ENCODE measurements at regions of chr12 and their contacts with region 1.

Region 1: GRCh38 chr12:121060149-121061001 is 21.3 kb upstream of the OASL start:
- DNase-seq: peak; percentile 84
- H3K4me3 ChIP-seq: peak overlapping the region; percentile 59
- H3K27ac ChIP-seq: peak overlapping the region; percentile 18
- H3K4me1 ChIP-seq: peaks cover 12% of the 10 kb centered on the region
- CTCF ChIP-seq: peak; percentile 73

Region 2: DNA sequence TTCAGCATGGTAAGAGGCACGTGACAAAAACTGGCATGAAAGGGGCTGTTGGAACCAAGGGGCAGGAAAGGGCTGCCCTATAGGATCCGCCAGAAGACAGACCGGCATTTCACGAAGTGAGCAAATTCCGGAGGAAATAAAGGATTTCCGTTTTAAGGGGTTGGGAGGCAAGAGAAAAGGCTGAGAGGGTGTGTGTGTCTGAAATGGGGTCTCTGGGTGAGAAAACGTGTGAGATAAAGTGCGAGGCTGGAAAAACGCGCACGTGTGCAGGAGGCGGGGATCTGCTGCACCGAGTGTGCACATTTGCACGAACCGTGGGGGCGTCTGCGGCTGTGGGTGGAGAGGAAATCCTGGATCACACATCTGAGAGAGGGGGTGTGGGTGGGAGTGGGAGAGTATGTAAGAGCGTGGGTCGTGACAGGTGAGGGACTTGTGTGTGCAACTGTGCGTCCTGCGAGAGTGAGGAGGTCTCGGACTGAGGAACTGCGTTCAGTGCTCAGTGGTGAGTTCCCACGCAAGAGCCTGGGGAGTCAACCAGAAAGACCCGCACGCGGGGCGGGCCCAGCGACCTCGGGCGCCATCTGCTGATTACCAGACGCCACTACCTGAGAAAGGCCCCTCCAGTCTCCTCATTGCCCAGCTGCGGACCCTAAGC is 35.3 kb after region 1 on chr12:
- CTCF ChIA-PET with region 1: no interaction called
- POLR2A ChIA-PET with region 1: no interaction called
- intact Hi-C with region 1: loop called (anchors 1 kb)
- DNase-seq: peak; percentile 65
- H3K4me3 ChIP-seq: no peak overlapping the region
- H3K27ac ChIP-seq: no peak overlapping the region
- H3K4me1 ChIP-seq: peaks cover 6% of the 10 kb centered on the region
- CTCF ChIP-seq: peak; percentile 81

Region 3: GRCh38 chr12:121110211-121110940 is 50.0 kb after region 1 on chr12:
- CTCF ChIA-PET with region 1: no interaction called
- POLR2A ChIA-PET with region 1: no interaction called
- intact Hi-C with region 1: loop called (anchors 5 kb)
- DNase-seq: peak; percentile 69
- H3K4me3 ChIP-seq: no peak overlapping the region
- H3K27ac ChIP-seq: no peak overlapping the region
- H3K4me1 ChIP-seq: no peaks in the 10 kb centered on the region
- CTCF ChIP-seq: peak; percentile 99

Region 4: DNA sequence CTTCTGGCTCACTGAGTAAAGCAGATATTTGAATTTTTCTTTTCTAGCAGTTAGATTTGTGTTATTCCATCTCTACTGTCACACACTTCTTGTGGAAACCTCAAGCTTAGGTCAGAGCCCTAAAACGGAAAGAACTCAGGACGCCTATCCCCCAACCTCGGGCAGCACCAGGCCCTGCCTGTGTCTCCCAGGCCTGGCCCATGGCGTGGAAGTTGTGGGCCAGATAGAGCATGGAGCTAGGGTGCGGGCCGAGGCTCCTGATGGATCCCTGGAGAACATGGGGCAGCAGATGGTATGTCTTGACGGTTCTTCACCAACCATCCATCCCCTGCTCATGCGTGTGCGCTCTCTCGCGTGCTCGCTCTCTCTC is 170.1 kb after region 1 on chr12:
- CTCF ChIA-PET with region 1: no interaction called
- POLR2A ChIA-PET with region 1: no interaction called
- intact Hi-C with region 1: loop called (anchors 5 kb)
- DNase-seq: no peak
- H3K4me3 ChIP-seq: no peak overlapping the region
- H3K27ac ChIP-seq: no peak overlapping the region
- H3K4me1 ChIP-seq: peaks cover 12% of the 10 kb centered on the region
- CTCF ChIP-seq: no peak; the same call in 1 of the 2 replicates

Measured in OCI-LY7 (cell line).